Activated B cell treated with CpG ODN at 0.5 μM for 24 hours (primary cell): ENCODE measurements at regions of chr4 and their contacts with region 1.

Region 1: DNA sequence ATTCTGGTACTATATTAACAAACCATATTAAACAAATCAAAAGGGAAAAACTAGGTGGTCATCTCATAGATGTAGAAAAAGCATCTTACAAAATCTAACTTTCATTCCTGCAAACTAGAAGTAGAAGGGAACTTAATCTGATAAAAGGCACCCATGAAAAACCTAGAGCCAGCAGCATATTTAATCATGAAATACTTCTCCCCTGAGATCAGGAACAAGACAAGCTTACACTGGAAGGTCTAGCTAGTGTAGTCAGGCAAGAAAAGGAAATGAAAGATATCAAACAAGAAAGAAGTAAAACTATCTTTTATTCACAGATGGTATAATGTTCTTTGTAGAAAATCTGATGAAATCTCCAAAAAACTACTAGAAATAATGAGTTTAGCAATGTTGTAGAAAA is 41.2 kb downstream of the ATP10D start:
- DNase-seq: no peak
- ATAC-seq: no peak
- H3K4me3 Mint-ChIP-seq: no peak overlapping the region
- H3K27ac Mint-ChIP-seq: no peak overlapping the region
- H3K4me1 Mint-ChIP-seq: peaks cover 20% of the 10 kb centered on the region
- H3K27me3 Mint-ChIP-seq: no peaks in the 10 kb centered on the region
- CTCF ChIP-seq: no peak

Region 2: GRCh38 chr4:47538495-47539154 is 12.3 kb after region 1 on chr4:
- CTCF ChIA-PET with region 1: no interaction called
- POLR2A ChIA-PET with region 1: no interaction called
- intact Hi-C with region 1: loop called (anchors 2 kb)
- DNase-seq: no peak
- ATAC-seq: no peak
- H3K4me3 Mint-ChIP-seq: no peak overlapping the region
- H3K27ac Mint-ChIP-seq: no peak overlapping the region
- H3K4me1 Mint-ChIP-seq: peaks cover 12% of the 10 kb centered on the region
- H3K27me3 Mint-ChIP-seq: no peaks in the 10 kb centered on the region
- CTCF ChIP-seq: no peak